Left colon (tissue), 2 donors: ENCODE measurements at regions of chr1 and their contacts with region 1.

Region 1: DNA sequence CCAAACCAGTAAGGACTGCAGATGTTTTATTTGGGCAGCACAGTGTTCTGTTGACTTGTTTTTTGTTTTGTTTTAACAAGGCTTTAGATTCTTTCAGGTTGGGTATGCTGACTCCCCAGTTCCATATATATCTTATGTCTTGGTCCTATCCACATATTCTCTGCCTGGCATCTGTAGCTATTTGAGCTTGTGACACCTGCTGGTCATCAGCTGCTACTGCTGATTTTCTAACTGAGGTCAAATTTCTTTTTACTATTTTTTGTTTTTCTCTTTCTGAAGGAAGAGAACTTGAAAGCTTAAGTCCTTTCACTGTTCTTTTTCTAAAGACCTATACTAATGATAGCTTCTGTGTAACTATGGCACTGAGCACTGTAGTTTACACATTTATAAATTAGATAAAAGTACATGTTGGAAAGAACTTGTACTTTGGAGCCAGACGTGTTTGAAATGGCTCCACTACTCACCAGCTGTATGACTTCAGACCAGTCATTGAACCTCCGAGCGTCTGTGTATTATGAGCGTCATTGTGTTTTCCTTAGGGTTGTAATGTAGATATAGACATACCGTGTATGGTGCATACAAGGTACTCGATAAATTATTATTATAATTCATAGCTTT is 109.4 kb downstream of the NRDC start:
- DNase-seq: peak in 1 of 2 donors; percentile 13
- ATAC-seq: peak; percentile 85

Region 2: DNA sequence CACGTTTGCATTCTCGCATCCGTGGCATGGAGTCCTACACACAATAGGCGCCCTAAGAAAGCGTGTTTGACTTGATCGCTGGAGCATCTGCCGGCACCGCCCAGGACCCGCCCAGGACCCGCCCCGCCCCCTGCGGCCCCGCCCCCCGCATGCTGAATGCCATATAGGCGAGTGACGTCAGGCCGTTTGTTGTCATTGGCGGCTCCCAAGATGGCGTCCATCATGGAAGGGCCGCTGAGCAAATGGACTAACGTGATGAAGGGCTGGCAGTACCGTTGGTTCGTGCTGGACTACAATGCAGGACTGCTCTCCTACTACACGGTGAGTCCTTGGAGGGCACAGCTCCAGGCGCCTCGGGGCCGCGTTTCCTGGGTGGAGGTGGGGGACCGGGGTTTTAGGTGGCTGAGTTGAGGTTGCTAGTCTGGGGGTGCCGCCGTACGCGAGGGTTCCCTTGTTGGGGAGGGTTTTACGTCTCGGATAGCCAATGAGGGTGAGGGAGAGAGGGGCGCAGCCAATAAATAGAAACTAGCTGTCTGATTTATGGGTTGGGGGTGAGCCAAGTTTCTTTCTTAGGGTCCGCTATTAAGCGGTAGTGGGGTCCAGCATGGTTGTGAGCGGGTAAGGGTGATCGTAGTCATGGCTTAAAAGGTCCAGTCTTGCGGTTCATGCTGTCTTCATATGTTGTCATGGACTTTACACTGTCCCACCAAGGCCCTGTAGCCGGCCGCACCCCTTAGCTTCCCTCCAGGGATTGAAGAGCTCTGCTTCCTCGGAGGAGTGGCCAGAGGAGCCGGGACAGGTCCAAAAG is 152.0 kb before region 1 on chr1 and contains the start of gene OSBPL9:
- intact Hi-C with region 1: loop called in 1 of 2 experiments (anchors 10 kb)
- DNase-seq: peak; percentile 88 to 93
- ATAC-seq: peak; percentile 96
- total RNA-seq, gene OSBPL9: 51.2 to 52.2 TPM

Region 3: DNA sequence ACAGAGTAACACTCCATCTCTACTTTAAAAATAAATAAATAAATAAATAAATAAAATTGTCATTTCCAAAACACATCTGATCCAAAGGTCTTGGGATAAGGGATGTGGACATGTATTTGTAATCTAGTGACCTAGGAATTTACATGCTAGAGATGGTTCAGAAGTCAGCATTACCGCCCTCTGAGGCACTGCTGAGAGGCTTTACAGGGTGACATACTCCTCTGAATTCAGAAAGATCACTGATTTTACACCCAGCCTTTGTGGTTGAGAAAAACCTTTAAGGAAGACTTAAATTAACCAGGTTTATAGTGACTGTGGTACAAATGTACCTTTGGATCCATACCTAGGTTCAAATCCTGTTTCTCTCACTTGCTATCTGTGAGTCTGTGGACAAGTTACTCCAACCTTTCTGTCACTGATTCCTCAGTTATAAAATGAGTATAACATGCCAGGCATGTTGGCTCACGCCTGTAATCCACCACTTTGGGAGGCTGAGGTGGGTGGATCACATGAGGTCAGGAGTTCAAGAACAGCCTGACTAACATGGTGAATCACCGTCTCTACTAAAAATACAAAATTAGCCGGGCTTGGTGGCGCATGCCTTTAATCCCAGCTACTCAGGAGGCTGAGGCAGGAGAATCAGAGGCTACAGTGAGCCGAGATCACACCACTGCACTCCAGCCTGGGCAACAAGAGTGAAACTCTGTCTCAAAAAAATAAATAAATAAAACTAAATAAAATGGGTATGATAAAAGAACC is 132.1 kb before region 1 on chr1:
- intact Hi-C with region 1: no loop called
- DNase-seq: no peak
- ATAC-seq: peak; percentile 82